Activated CD4-positive, alpha-beta T cell treated with anti-CD3 and anti-CD28 coated beads for 36 hours (primary cell): ENCODE measurements at regions of chr6 and their contacts with region 1.

Region 1: DNA sequence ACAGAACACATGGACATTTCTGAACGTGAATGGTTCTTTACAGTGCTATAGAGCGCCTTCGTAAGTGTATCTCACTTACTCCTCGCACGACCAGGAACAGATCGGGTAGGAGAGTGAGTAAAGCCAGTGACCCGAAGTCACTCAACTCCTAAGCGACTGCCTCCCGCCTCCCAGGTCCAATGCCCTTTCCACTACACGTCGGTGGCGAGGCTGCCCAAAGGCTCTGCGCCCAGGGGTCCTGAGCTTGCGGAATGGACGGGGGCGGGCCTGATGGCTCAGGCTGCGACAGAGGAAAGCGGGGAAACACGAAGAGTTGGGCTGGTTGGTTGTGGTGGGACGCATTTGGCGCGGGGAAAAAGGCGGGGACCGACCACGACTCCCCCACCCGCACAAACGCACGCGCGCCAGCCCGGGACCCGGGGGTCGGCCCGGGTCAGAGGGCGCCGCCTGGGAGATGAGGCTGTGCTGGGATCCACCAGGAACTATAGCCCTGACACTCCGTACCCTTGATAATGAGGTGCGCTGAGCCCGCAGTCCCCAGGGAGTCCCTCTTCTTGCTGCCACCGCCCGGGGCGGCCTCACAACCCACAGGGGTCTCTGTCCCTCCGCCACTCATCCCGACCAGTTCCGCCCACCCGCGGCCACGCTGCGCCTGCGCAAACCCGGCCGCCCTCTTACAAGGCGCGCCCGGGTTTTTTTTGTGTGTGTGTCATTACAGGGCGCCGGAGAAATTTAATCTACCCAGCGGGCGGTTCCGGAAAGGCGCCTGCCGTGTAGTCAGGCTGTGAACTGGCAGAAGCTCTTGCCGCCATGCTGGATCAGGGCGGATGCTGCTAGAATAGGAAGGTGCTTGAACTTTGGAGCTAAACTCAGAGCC is at the start of gene BLOC1S5:
- DNase-seq: peak; percentile 98
- ATAC-seq: peak; percentile 89
- H3K4me3 Mint-ChIP-seq: peak within 1 kb of the TSS; percentile 90
- H3K27ac Mint-ChIP-seq: peak within 1 kb of the TSS; percentile 94
- H3K4me1 Mint-ChIP-seq: peaks cover 29% of the 10 kb centered on the region
- H3K27me3 Mint-ChIP-seq: no peaks in the 10 kb centered on the region
- total RNA-seq, gene BLOC1S5: 20.0 to 30.3 TPM

Region 2: DNA sequence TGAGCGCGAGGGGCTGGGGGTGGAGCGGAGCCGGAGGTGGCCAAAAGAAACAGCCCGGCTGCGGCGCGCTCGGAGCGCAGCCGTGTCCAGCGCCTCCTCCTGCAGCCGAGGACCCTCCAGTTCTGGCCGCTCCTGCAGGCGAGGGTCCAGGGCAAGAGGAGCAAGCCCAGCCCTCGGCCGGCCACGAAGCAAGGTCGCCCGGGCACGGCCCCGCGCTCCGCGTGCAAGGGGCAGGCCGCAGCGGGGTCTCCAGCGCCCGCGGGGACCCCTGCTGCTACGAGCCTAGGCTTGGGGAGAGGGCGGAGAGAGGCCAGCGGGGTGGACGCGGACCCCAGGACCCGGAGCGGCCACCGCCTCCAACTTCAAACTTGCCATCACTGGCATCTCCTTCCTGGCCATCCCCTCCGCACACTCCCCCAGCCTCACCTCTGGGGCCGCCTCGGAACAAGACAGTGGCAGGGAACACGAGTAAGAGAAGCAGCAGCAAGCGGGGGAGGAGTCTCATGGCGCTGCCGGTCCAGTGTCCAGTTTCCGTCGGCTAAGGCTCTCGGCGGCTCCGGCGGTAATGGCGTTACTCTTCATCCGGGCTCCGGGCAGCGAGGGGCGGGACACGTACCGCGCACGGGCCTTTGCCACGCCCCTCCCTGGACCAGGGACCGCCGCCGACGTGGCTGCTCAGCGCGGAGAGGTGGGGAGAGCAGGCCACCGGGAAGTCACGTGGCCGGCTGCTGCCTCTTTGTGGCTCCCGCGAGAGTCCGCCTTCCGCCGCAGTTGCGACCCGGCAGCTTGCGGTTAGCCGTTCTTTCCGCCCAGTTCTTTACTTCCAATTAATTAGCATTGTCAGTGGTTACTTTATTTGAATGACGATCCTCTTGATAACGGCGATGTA is 751.1 kb before region 1 on chr6 and contains the start of gene SSR1:
- CTCF ChIA-PET with region 1: no interaction called
- POLR2A ChIA-PET with region 1: no interaction called
- intact Hi-C with region 1: loop called (anchors 2 to 10 kb)
- DNase-seq: peak; percentile 97
- ATAC-seq: peak; percentile 97
- H3K4me3 Mint-ChIP-seq: peak within 1 kb of the TSS; percentile 99
- H3K27ac Mint-ChIP-seq: peak within 1 kb of the TSS; percentile 98
- H3K4me1 Mint-ChIP-seq: peaks cover 45% of the 10 kb centered on the region
- H3K27me3 Mint-ChIP-seq: no peaks in the 10 kb centered on the region
- total RNA-seq, gene SSR1: 129 to 165 TPM

Region 3: DNA sequence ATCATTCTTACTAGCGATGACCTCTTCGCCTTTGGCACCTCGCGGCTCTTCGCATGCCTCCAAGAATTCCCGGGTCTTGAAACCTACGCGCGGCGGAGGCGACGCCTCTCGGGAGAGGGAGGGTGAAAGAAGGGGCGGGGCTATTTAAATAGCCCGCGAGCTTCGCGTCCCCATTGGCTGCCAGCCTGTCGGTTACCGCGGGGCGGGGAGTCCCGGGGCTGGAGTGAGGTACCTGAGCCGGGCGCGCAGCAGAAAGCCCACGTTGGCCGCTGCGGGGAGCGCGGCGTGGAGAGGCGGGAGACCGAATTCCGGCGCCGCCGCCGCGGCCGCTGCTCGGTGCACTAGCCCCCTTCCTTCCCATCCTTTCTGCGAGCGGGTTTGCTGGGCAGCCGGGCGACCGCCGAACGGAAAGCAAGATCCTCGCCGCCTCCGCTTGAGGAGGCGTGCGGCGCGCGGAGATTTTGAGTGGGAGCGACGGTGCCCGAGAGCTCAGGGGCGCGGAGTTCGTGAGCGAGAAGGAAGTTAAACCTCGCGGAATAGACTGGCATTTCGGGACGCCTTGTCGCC is 338.1 kb before region 1 on chr6 and contains the start of gene BMP6:
- CTCF ChIA-PET with region 1: interaction called, 9 read pairs
- POLR2A ChIA-PET with region 1: interaction called, 4 read pairs
- intact Hi-C with region 1: loop called (anchors 1 kb)
- DNase-seq: peak; percentile 82
- ATAC-seq: peak; percentile 78
- H3K4me3 Mint-ChIP-seq: peak within 1 kb of the TSS; percentile 69
- H3K27ac Mint-ChIP-seq: no peak within 1 kb of the TSS
- H3K4me1 Mint-ChIP-seq: peaks cover 18% of the 10 kb centered on the region
- H3K27me3 Mint-ChIP-seq: peaks cover 60% of the 10 kb centered on the region
- total RNA-seq, gene BMP6: 0.14 to 0.27 TPM

Region 4: DNA sequence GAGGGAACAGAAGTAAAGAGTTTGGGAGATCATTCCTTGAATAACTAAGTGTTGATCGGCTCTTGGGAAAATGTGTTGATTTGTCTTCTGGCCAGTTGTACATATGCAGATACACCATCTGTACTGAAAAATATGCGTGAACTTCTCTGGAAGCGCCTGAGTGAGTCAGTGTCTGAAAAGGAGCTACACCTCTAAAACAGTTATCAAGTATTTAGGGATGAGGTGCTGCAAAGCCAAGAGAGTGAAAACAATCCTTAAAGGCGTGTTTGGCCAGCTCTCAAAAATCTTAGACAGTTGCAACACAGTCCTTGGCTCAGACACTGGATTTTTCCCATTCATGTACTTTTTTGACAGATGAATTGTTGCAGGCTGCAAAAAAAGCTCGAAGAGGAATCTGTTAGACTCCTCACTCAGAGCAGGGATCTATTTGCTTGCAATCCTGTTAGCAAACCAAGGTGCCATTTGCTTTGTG is 276.8 kb before region 1 on chr6:
- CTCF ChIA-PET with region 1: no interaction called
- POLR2A ChIA-PET with region 1: no interaction called
- intact Hi-C with region 1: no loop called
- DNase-seq: no peak
- ATAC-seq: no peak
- H3K4me3 Mint-ChIP-seq: no peak overlapping the region
- H3K27ac Mint-ChIP-seq: no peak overlapping the region
- H3K4me1 Mint-ChIP-seq: no peaks in the 10 kb centered on the region
- H3K27me3 Mint-ChIP-seq: peaks cover 31% of the 10 kb centered on the region

Region 5: DNA sequence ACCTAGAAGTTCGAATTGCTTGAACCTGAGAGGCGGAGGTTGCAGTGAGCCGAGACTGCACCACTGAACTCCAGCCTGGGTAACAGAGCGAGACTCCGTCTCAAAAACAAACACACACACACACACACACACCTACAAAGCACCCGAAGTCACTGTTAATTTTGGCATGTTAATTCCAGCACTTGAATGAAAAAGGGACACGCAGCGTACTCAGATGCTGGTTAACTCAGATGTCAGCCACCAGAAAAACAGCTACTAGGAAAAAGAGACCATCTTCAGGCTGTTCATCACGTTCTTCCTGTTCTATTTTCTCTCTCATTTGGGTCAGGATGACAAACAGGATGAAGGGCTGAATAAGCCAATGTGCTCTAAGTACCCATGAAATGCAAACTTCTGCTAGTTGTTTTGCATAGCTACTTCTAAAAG is 46.7 kb before region 1 on chr6:
- CTCF ChIA-PET with region 1: no interaction called
- POLR2A ChIA-PET with region 1: interaction called, 5 read pairs
- intact Hi-C with region 1: loop called in 1 of 2 experiments (anchors 5 kb)
- DNase-seq: peak; percentile 24
- ATAC-seq: peak; percentile 95
- H3K4me3 Mint-ChIP-seq: peak overlapping the region; percentile 77
- H3K27ac Mint-ChIP-seq: peak overlapping the region; percentile 97
- H3K4me1 Mint-ChIP-seq: peaks cover 18% of the 10 kb centered on the region
- H3K27me3 Mint-ChIP-seq: no peaks in the 10 kb centered on the region

Region 6: GRCh38 chr6:8435160-8435852 is 371.3 kb after region 1 on chr6 and contains the start of gene SLC35B3:
- CTCF ChIA-PET with region 1: no interaction called
- POLR2A ChIA-PET with region 1: no interaction called
- intact Hi-C with region 1: loop called in 1 of 2 experiments (anchors 1 kb)
- DNase-seq: peak; percentile 99
- ATAC-seq: peak; percentile 95
- H3K4me3 Mint-ChIP-seq: peak within 1 kb of the TSS; percentile 92
- H3K27ac Mint-ChIP-seq: peak within 1 kb of the TSS; percentile 95
- H3K4me1 Mint-ChIP-seq: peaks cover 38% of the 10 kb centered on the region
- H3K27me3 Mint-ChIP-seq: no peaks in the 10 kb centered on the region
- total RNA-seq, gene SLC35B3: 4.9 to 6.7 TPM